Endothelial cell of umbilical vein (primary cell): ENCODE measurements at regions of chrX and their contacts with region 1.

Region 1: GRCh38 chrX:54808605-54809483 is 1.3 kb downstream of the MAGED2 start:
- DNase-seq: peak; percentile 98
- H3K4me3 ChIP-seq: peak overlapping the region; percentile 43 to 83 (median 81)
- H3K27ac ChIP-seq: peak overlapping the region; percentile 23
- H3K4me1 ChIP-seq: peaks cover 5% of the 10 kb centered on the region
- H3K27me3 ChIP-seq: peaks cover 3 to 10% of the 10 kb centered on the region in 2 experiments
- CTCF ChIP-seq: no peak
- POLR2A ChIP-seq: peak; percentile 66

Region 2: GRCh38 chrX:53616946-53617345 is 1191.9 kb before region 1 on chrX:
- CTCF ChIA-PET with region 1: no interaction called
- POLR2A ChIA-PET with region 1: no interaction called
- dilution Hi-C with region 1: no loop called
- intact Hi-C with region 1: no loop called
- DNase-seq: no peak
- H3K4me3 ChIP-seq: no peak overlapping the region
- H3K27ac ChIP-seq: no peak overlapping the region
- H3K4me1 ChIP-seq: no peaks in the 10 kb centered on the region
- H3K27me3 ChIP-seq: no peaks in the 10 kb centered on the region
- CTCF ChIP-seq: no peak
- POLR2A ChIP-seq: no peak

Region 3: GRCh38 chrX:53683556-53684414 is 1125.1 kb before region 1 on chrX:
- CTCF ChIA-PET with region 1: no interaction called
- POLR2A ChIA-PET with region 1: no interaction called
- dilution Hi-C with region 1: no loop called
- intact Hi-C with region 1: loop called (anchors 10 kb)
- DNase-seq: peak; percentile 99
- H3K4me3 ChIP-seq: peak overlapping the region; percentile 79 to 98 (median 92)
- H3K27ac ChIP-seq: peak overlapping the region; percentile 88
- H3K4me1 ChIP-seq: peaks cover 23% of the 10 kb centered on the region
- H3K27me3 ChIP-seq: no peaks in the 10 kb centered on the region
- CTCF ChIP-seq: no peak
- POLR2A ChIP-seq: no peak

Region 4: GRCh38 chrX:54182864-54183608 is 625.8 kb before region 1 on chrX and contains the start of gene FAM120C:
- CTCF ChIA-PET with region 1: no interaction called
- POLR2A ChIA-PET with region 1: no interaction called
- dilution Hi-C with region 1: no loop called
- intact Hi-C with region 1: loop called (anchors 10 kb)
- DNase-seq: peak; percentile 76
- H3K4me3 ChIP-seq: peak within 1 kb of the TSS; percentile 55 to 81 (median 81)
- H3K27ac ChIP-seq: peak within 1 kb of the TSS; percentile 72
- H3K4me1 ChIP-seq: peaks cover 35% of the 10 kb centered on the region
- H3K27me3 ChIP-seq: no peaks in the 10 kb centered on the region
- CTCF ChIP-seq: no peak
- POLR2A ChIP-seq: peak; percentile 55
- total RNA-seq, gene FAM120C: 10.1 and 11.4 TPM in 2 replicates

Region 5: DNA sequence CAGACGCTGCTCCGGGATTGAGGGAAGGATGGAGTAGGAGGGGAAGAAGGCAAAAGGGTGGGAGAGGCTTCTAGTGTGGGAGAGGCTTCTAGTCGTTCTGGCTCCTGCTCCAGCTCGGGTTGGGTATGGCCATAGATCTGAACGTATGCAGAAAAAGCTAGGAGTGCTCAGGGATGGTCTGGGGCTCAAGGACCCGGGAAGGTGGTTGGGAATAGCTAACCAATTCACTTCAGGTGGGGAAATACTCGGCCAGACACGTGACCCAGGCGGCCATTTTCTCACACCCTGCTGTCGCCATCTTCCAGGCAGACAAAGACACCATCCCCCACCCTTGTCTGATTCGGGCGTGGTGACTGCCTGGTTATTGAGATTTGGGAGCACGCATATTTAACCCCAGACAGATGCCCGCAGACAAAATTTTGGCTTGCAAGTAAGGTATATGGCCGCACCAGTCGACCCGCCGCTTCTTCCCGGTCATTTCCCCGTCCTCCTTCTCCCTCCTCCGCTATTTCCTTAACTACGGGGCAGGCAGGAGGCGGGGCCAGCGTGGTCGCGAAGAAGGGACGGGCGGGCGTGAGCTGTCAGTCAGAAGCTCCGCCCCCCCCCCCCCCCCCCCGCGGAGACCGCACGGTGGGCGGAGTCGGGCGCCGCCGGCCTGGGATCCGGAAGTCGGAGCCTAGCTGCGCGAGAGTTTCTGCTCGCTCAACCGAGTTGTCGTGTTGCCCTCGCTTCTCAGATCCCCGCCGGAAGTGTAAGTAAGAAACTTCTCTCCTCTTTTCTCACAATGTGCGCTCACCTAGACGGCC is 279.1 kb before region 1 on chrX and contains the start of gene GNL3L:
- CTCF ChIA-PET with region 1: no interaction called
- POLR2A ChIA-PET with region 1: no interaction called
- dilution Hi-C with region 1: no loop called
- intact Hi-C with region 1: loop called (anchors 1 kb)
- DNase-seq: peak; percentile 78
- H3K4me3 ChIP-seq: peak within 1 kb of the TSS; percentile 17 to 86 (median 69)
- H3K27ac ChIP-seq: peak within 1 kb of the TSS; percentile 73
- H3K4me1 ChIP-seq: peaks cover 10% of the 10 kb centered on the region
- H3K27me3 ChIP-seq: no peaks in the 10 kb centered on the region
- CTCF ChIP-seq: no peak
- POLR2A ChIP-seq: peak; percentile 79
- total RNA-seq, gene GNL3L: 46.0 and 48.0 TPM in 2 replicates

Region 6: DNA sequence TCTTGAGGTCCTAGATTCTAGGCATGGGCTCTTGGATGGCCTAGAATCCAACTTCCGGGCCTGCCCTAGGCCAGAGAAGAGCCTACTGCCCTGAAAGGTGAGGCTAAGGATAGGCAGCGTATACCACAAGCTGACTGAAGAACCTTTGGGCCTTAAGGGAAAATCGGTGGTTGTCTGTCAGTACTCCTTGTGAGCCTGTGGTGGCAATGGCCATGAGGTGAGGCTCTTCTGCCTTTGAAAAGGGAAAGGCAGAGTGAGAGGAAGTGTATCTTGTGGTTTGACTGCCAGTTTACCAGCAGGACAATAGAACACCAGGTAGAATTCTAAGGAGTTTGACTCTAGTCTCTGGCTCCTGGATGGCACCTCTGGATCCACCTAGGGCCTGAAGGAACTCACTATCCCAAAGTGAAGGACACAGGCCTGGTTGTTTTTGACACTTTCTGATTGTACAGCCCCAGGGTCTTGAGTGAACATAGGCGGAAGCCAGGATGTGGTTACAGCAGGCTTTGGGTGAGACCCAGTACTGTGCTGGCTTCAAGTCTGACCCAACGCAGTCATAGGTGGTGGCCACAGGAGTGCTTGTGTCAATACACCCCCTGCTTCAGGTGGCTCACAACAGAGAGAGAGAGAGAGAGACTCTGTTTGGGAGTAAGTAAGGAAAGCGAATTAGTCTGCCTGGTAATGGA is 31.7 kb before region 1 on chrX:
- CTCF ChIA-PET with region 1: no interaction called
- POLR2A ChIA-PET with region 1: no interaction called
- dilution Hi-C with region 1: no loop called
- intact Hi-C with region 1: no loop called
- DNase-seq: no peak
- H3K4me3 ChIP-seq: no peak overlapping the region
- H3K27ac ChIP-seq: no peak overlapping the region
- H3K4me1 ChIP-seq: no peaks in the 10 kb centered on the region
- H3K27me3 ChIP-seq: no peaks in the 10 kb centered on the region
- CTCF ChIP-seq: no peak
- POLR2A ChIP-seq: no peak

Region 7: GRCh38 chrX:54788446-54788845 is 20.4 kb before region 1 on chrX:
- CTCF ChIA-PET with region 1: no interaction called
- POLR2A ChIA-PET with region 1: no interaction called
- dilution Hi-C with region 1: no loop called
- intact Hi-C with region 1: no loop called
- DNase-seq: no peak
- H3K4me3 ChIP-seq: no peak overlapping the region
- H3K27ac ChIP-seq: no peak overlapping the region
- H3K4me1 ChIP-seq: no peaks in the 10 kb centered on the region
- H3K27me3 ChIP-seq: peaks cover 0 to 3% of the 10 kb centered on the region in 2 experiments
- CTCF ChIP-seq: no peak
- POLR2A ChIP-seq: no peak

Region 8: DNA sequence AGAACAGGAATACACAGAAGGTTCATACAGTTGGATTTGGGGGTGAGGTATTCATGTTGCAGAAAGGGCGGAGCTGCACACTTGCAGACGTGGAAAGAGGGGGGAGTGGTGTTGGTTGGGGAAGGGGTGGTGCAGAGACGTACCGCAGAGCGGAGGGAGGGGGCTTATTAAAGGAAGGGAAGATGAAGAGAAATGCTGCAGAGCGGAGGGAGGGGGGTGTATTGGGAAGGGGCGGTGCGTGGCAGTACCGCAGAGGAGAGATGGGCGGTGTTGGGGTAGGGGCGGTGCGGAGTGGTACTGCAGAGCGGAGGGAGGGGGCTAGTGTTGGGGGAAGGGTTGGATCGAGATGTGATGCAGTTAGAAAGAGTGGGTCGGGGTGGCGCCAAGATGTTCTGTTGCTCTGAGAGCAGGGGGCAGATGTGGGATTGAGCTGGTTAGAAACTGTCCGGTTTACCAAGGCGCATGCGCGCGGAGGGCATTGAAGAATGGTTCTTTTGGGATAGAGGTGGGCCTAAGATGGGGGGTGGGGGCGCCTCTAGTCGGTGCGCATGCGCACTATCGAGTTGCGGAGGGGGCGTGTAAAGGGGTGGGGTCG is 112.7 kb after region 1 on chrX:
- CTCF ChIA-PET with region 1: no interaction called
- POLR2A ChIA-PET with region 1: no interaction called
- dilution Hi-C with region 1: no loop called
- intact Hi-C with region 1: loop called (anchors 5 kb)
- DNase-seq: peak; percentile 59
- H3K4me3 ChIP-seq: peak overlapping the region; percentile 50 to 62 (median 55)
- H3K27ac ChIP-seq: no peak overlapping the region
- H3K4me1 ChIP-seq: peaks cover 3% of the 10 kb centered on the region
- H3K27me3 ChIP-seq: no peaks in the 10 kb centered on the region
- CTCF ChIP-seq: no peak
- POLR2A ChIP-seq: no peak

Region 9: DNA sequence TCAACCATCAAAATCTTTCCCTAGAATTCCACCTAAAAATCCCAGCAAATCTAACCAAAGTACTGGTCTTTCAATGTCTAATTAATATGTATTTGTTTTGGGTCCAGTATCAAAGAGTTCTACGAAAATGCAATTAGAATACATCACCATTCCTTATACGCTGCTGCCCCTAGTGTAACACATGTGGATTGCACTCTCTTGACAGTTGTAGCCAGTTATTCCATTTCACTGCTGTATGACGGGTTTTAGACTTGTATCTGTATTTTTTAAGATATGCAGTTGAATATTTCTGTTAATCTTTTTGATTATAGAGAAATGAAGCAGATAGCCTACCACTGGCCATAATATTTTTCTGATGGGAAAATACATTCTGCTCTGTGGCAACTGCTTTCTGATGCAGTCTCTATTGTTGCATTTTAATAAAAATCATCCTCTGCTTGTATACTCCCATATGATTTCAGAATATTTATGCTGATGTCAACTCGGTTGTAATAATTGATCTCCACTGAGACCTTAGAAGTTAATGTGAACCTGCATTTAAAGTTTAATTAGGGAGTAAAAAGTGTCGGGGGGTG is 248.9 kb after region 1 on chrX:
- CTCF ChIA-PET with region 1: no interaction called
- POLR2A ChIA-PET with region 1: no interaction called
- dilution Hi-C with region 1: no loop called
- intact Hi-C with region 1: loop called (anchors 1 kb)
- DNase-seq: peak; percentile 65
- H3K4me3 ChIP-seq: peak overlapping the region in 1 of 3 experiments; percentile 15
- H3K27ac ChIP-seq: peak overlapping the region; percentile 87
- H3K4me1 ChIP-seq: peaks cover 4% of the 10 kb centered on the region
- H3K27me3 ChIP-seq: no peaks in the 10 kb centered on the region
- CTCF ChIP-seq: peak; percentile 45 to 54
- POLR2A ChIP-seq: no peak

Region 10: GRCh38 chrX:55717521-55718497 is 909.0 kb after region 1 on chrX and contains the start of gene RRAGB:
- CTCF ChIA-PET with region 1: no interaction called
- POLR2A ChIA-PET with region 1: no interaction called
- dilution Hi-C with region 1: no loop called
- intact Hi-C with region 1: loop called (anchors 10 kb)
- DNase-seq: peak; percentile 93
- H3K4me3 ChIP-seq: peak within 1 kb of the TSS; percentile 82 to 89 (median 89)
- H3K27ac ChIP-seq: peak within 1 kb of the TSS; percentile 95
- H3K4me1 ChIP-seq: peaks cover 28% of the 10 kb centered on the region
- H3K27me3 ChIP-seq: no peaks in the 10 kb centered on the region
- CTCF ChIP-seq: peak; percentile 53 to 58
- POLR2A ChIP-seq: peak; percentile 30
- total RNA-seq, gene RRAGB: 12.3 and 14.3 TPM in 2 replicates